CD4-positive, alpha-beta memory T cell (primary cell): ENCODE measurements at regions of chr3 and their contacts with region 1.

Region 1: GRCh38 chr3:5057857-5058324 is 64.2 kb upstream of the ARL8B start:
- DNase-seq: peak; percentile 66 to 82 (median 70)
- H3K4me3 ChIP-seq: no peak overlapping the region
- H3K4me3 Mint-ChIP-seq: no peak overlapping the region
- H3K27ac ChIP-seq: no peak overlapping the region
- H3K27ac Mint-ChIP-seq: no peak overlapping the region
- H3K4me1 ChIP-seq: peaks cover 3% of the 10 kb centered on the region
- H3K4me1 Mint-ChIP-seq: peaks cover 0 to 4% (median 1%) of the 10 kb centered on the region in 4 donors
- H3K27me3 ChIP-seq: no peaks in the 10 kb centered on the region
- H3K27me3 Mint-ChIP-seq: peaks cover 1% of the 10 kb centered on the region in 2 donors

Region 2: GRCh38 chr3:5026331-5027218 is 31.3 kb before region 1 on chr3:
- CTCF ChIA-PET with region 1: interaction called, 6 read pairs
- POLR2A ChIA-PET with region 1: interaction called, 3 read pairs
- intact Hi-C with region 1: loop called (anchors 2 kb)
- DNase-seq: peak; percentile 54 to 77 (median 57)
- H3K4me3 ChIP-seq: peak overlapping the region in 1 of 2 donors; percentile 71
- H3K4me3 Mint-ChIP-seq: peak overlapping the region; percentile 85 to 93 (median 87)
- H3K27ac ChIP-seq: peak overlapping the region; percentile 50
- H3K27ac Mint-ChIP-seq: peak overlapping the region; percentile 81 to 97 (median 93)
- H3K4me1 ChIP-seq: peaks cover 13% of the 10 kb centered on the region
- H3K4me1 Mint-ChIP-seq: peaks cover 15 to 35% (median 23%) of the 10 kb centered on the region in 4 donors
- H3K27me3 ChIP-seq: no peaks in the 10 kb centered on the region
- H3K27me3 Mint-ChIP-seq: no peaks in the 10 kb centered on the region